CD8-positive, alpha-beta memory T cell (primary cell): ENCODE measurements at regions of chr13 and their contacts with region 1.

Region 1: DNA sequence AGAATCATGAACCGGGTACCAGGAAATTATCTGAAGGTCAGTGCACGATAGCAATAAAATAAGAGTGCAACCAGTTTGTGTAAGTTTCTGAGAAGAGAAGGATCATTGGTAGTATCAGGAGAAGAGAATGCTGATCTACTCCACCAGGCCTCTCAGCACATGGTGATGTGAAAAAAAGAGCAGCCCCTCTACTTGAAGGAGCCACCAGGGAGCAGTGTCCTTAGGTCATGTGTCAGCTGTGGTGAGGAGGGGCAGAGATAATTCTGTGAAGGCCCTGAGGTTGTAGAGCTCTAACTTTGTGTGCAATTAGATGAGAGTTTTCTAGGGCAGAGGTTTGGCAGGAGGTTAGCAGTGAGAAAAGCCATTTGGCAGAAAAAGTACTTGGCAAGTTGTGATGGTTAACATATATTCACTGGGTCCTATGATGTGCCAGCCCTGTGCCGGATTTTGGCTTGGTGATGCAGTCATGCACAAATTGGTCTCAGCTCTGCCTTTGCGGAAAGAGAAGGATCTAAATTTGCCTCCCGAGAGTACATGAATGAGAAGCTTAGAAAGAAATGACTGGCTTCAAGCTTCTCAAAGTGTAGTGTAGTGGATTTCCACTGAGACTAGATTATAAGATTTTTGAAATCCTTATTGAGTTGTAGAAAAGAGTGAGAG is 19.2 kb upstream of the ZC3H13 start:
- DNase-seq: no peak
- H3K4me3 ChIP-seq: no peak overlapping the region
- H3K4me3 Mint-ChIP-seq: no peak overlapping the region
- H3K27ac ChIP-seq: no peak overlapping the region
- H3K27ac Mint-ChIP-seq: no peak overlapping the region
- H3K4me1 ChIP-seq: no peaks in the 10 kb centered on the region
- H3K4me1 Mint-ChIP-seq: no peaks in the 10 kb centered on the region
- H3K27me3 ChIP-seq: no peaks in the 10 kb centered on the region
- H3K27me3 Mint-ChIP-seq: peaks cover 0 to 3% of the 10 kb centered on the region in 2 donors

Region 2: DNA sequence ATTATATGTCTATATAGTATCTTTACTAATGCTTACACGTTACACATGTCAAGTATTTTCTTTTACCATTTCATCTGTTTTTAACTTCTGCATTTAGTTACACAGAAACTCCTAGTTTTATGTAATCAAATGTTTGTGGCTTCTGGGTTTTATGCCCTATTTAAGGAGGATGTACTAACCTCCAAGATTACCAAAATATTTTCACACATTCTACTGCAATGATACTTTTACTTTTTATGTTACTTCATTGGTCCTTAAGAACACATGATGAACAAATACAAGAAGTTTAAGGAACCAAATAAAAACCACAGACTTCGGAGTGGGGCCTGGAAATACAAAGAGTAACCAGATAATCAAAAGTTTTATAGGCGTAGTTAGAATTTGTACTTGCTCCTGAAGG is 56.4 kb before region 1 on chr13:
- CTCF ChIA-PET with region 1: no interaction called
- POLR2A ChIA-PET with region 1: no interaction called
- DNase-seq: no peak
- H3K4me3 ChIP-seq: no peak overlapping the region
- H3K4me3 Mint-ChIP-seq: no peak overlapping the region
- H3K27ac ChIP-seq: no peak overlapping the region
- H3K27ac Mint-ChIP-seq: peak overlapping the region in 1 of 8 donors; percentile 44
- H3K4me1 ChIP-seq: no peaks in the 10 kb centered on the region
- H3K4me1 Mint-ChIP-seq: peaks cover 0 to 13% (median 6%) of the 10 kb centered on the region in 3 donors
- H3K27me3 ChIP-seq: no peaks in the 10 kb centered on the region
- H3K27me3 Mint-ChIP-seq: no peaks in the 10 kb centered on the region

Region 3: GRCh38 chr13:46149272-46150133 is 77.8 kb after region 1 on chr13:
- CTCF ChIA-PET with region 1: no interaction called
- POLR2A ChIA-PET with region 1: interaction called, 10 read pairs
- DNase-seq: no peak
- H3K4me3 ChIP-seq: no peak overlapping the region
- H3K4me3 Mint-ChIP-seq: no peak overlapping the region
- H3K27ac ChIP-seq: no peak overlapping the region
- H3K27ac Mint-ChIP-seq: peak overlapping the region; percentile 55 to 96 (median 89)
- H3K4me1 ChIP-seq: no peaks in the 10 kb centered on the region
- H3K4me1 Mint-ChIP-seq: peaks cover 38 to 53% (median 52%) of the 10 kb centered on the region in 3 donors
- H3K27me3 ChIP-seq: no peaks in the 10 kb centered on the region
- H3K27me3 Mint-ChIP-seq: no peaks in the 10 kb centered on the region